Lower lobe of right lung (tissue), 2 donors: ENCODE measurements at regions of chr6 and their contacts with region 1.

Region 1: GRCh38 chr6:71383901-71384489 is 95.4 kb downstream of the OGFRL1 start:
- DNase-seq: no peak
- ATAC-seq: peak in 1 of 2 donors; percentile 35
- H3K4me3 ChIP-seq: no peak overlapping the region
- H3K27ac ChIP-seq: no peak overlapping the region
- H3K4me1 ChIP-seq: peaks cover 53% of the 10 kb centered on the region
- H3K27me3 ChIP-seq: no peaks in the 10 kb centered on the region
- CTCF ChIP-seq: peak; percentile 66

Region 2: GRCh38 chr6:71510057-71510713 is 126.2 kb after region 1 on chr6:
- intact Hi-C with region 1: loop called (anchors 10 kb)
- DNase-seq: no peak
- ATAC-seq: peak; percentile 84 to 93
- H3K4me3 ChIP-seq: no peak overlapping the region
- H3K27ac ChIP-seq: no peak overlapping the region
- H3K4me1 ChIP-seq: peaks cover 11% of the 10 kb centered on the region
- H3K27me3 ChIP-seq: no peaks in the 10 kb centered on the region
- CTCF ChIP-seq: peak; percentile 67

Region 3: GRCh38 chr6:71531798-71532201 is 147.8 kb after region 1 on chr6:
- intact Hi-C with region 1: no loop called
- DNase-seq: no peak
- ATAC-seq: no peak
- H3K4me3 ChIP-seq: no peak overlapping the region
- H3K27ac ChIP-seq: no peak overlapping the region
- H3K4me1 ChIP-seq: no peaks in the 10 kb centered on the region
- H3K27me3 ChIP-seq: no peaks in the 10 kb centered on the region
- CTCF ChIP-seq: no peak